Cardiac septum (tissue), 1 donor: ENCODE measurements at regions of chr4 and their contacts with region 1.

Region 1: GRCh38 chr4:139815778-139816601 is 150.4 kb downstream of the MGST2 start:
- DNase-seq: no peak

Region 2: DNA sequence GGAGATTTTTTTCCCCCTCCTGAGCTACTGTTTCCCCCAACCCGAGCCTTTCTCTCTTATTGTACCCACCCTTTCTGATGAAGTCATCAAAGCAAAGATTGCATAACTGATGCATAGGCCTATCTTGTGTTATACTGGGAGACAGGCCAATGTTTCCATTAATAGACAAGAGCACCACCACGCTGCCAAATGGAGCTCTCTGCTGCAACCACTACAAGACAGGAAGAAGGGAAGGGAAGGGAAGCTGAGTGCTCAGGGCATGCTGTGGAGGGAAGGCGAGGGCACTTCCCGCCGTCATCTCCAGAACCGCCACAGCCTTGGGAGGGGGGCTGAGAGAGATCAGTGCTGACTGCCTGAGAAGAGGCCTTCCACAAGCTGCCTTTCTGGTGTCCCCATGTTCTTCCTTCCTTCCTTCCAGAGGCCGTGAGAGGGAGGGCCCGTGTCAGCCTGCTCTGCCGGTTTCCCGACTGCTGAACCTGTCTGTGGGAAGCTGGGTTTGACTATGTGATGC is 75.4 kb before region 1 on chr4:
- intact Hi-C with region 1: loop called (anchors 2 kb)
- DNase-seq: no peak

Region 3: DNA sequence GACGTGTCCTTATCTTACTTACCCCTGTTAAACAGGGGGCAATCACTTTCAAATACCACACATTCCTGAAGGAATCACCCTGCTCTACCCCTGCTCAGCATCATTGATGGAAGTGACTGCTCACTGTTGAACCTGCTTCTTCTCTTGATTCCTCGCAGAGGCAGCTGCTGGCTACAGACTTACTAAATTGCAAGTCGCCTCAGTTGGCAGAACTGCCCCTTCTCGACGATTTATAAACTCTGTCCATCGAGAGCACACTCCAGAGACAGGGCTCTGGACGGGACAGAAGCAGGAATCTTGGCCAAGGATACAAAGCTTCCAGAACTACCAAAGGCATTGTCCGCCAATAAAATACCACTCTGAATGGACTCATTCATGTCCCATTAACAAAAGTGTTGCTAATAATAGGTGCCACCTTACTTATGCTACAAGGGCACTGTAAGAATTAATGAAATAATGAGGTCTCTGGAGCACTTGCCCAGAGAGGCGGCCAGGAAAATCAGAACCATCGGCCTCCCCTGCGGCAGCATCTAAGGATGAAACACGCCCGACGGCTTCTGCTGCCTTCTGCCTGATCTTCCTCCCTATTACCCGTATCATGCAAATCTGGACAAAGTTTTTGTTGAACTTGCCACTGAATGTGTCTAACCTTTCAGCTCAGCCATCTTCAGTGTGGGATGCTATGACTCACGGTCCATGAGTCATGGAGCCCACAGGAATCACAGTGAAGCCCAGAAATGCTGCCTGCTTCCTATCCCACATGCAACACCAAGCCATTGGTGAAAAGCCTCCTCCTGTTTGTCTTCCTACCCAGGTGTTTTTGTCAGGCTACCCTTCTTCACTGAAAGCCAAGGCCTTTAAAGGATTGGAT is 173.1 kb after region 1 on chr4:
- intact Hi-C with region 1: loop called (anchors 5 kb)
- DNase-seq: no peak